Psoas muscle (tissue), 8 donors: ENCODE measurements at regions of chr7 and their contacts with region 1.

Region 1: DNA sequence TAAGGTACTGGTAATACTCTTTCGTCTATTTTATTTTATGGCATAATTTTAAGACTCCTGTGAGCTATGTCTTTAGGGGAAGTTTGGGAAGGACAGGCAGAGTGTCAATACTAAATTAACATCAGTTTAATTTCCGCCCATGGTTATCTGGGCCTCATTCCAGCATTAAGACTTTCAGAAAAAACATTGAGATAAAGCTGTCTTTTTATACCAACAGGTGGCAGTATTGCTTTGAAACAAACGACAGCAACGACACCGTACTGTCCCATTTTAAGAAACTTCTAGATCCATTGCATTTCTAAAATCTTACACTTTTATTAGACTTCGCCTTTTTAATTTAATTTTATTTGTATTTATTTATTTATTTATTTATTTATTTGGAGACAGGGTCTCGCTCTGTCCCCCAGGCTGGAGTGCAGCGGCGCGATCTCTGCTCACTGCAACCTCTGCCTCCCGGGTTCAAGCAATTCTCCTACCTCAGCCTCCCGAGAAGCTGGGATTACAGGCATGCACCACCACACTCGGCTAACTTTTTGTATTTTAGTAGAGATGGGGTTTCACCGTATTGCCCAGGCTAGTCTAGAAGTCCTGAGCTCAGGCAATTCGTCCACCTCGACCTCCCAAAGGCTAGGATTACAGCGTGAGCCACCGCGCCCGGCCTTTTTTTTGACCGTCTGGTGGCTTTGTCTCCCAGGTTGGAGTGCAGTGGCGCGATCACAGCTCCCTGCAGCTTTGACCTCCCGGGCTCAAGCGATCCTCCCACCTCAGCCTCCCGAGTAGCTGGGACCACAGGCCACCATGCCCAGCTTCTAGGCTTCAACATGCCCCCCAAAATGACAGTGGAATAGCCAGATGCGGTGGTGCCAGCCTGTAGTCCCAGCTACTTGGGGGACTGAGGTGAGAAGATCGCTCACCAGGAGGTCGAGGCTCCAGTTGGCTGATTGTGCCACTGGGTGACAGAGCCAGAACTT is 78.7 kb upstream of the C1GALT1 start:
- DNase-seq: no peak
- ATAC-seq: peak in 3 of 4 donors; percentile 40 to 81 (median 52)
- H3K4me3 ChIP-seq: no peak overlapping the region
- H3K27ac ChIP-seq: no peak overlapping the region
- H3K4me1 ChIP-seq: no peaks in the 10 kb centered on the region
- H3K27me3 ChIP-seq: no peaks in the 10 kb centered on the region
- CTCF ChIP-seq: peak; percentile 60

Region 2: GRCh38 chr7:6831018-6831725 is 272.5 kb before region 1 on chr7:
- intact Hi-C with region 1: no loop called
- DNase-seq: no peak
- ATAC-seq: no peak
- H3K4me3 ChIP-seq: no peak overlapping the region
- H3K27ac ChIP-seq: no peak overlapping the region
- H3K4me1 ChIP-seq: no peaks in the 10 kb centered on the region
- H3K27me3 ChIP-seq: peaks cover 0 to 17% (median 0%) of the 10 kb centered on the region in 3 donors
- CTCF ChIP-seq: no peak

Region 3: DNA sequence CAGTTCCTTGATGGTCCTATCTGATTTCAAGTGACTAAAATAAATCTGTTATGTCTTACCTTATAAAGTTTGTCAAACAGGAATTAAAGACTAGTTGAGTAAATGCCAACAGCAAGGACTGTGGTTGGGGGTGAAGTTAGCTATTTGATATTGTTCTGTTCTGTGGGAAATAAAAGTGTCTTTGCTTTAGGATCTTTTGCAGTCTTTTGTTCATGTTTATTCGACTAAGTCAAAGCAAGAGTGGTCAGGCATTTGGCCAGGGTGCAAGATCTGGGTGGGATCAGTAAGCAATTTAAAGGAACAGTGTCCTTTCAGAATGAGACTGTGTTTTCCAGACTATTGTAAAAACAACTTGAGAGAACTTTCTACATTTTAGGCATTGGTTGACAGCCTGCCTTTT is 432.1 kb after region 1 on chr7 and contains the start of gene COL28A1:
- intact Hi-C with region 1: loop called in 1 of 2 experiments (anchors 2 kb)
- DNase-seq: no peak
- ATAC-seq: peak in 2 of 4 donors; percentile 15 to 56
- H3K4me3 ChIP-seq: peak within 1 kb of the TSS; percentile 55
- H3K27ac ChIP-seq: peak within 1 kb of the TSS; percentile 51
- H3K4me1 ChIP-seq: peaks cover 5% of the 10 kb centered on the region
- H3K27me3 ChIP-seq: no peaks in the 10 kb centered on the region
- CTCF ChIP-seq: no peak
- total RNA-seq, gene COL28A1: 1.9 to 6.3 (median 3.0) TPM